ENCODE measurements at regions of chr13 and their contacts with region 1.

Region 1: DNA sequence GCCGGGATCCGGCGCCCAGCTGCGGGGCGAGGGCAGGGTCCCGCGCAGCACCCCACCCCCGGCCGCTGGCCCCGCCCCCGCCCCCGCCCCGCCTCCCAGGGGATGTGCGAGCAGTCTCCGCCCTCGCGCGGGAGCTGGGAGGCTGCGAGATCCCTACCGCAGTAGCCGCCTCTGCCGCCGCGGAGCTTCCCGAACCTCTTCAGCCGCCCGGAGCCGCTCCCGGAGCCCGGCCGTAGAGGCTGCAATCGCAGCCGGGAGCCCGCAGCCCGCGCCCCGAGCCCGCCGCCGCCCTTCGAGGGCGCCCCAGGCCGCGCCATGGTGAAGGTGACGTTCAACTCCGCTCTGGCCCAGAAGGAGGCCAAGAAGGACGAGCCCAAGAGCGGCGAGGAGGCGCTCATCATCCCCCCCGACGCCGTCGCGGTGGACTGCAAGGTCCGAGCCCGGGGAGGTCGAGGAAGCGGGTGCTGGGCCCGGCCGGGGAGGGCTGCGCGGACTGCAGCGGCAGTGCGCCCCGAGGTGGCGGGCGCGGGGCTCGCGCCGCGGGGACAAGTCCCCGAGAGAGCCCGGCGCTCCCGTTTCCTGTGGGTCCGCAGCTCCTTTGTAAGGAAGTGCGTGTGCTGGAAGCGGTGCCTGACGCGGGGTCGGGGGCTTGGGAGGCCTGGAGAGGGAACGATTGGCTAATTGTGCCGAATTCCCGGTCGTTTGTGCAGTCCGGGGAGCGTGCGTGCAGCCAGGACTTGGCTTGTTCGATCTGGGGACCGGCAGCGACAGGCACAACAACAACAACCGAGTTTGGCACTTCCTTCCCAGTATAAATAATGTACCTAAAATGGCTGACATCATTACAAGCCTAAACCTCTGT is at the start of gene ITM2B:
- DNase-seq: peak; percentile 58 to 64
- ATAC-seq: peak; percentile 71
- H3K4me3 ChIP-seq: peak within 1 kb of the TSS; percentile 76 to 99 (median 88)
- H3K27ac ChIP-seq: peak within 1 kb of the TSS; percentile 91 to 99 (median 97)
- H3K4me1 ChIP-seq: peaks cover 33 to 42% of the 10 kb centered on the region in 2 donors
- H3K27me3 ChIP-seq: no peaks in the 10 kb centered on the region
- CTCF ChIP-seq: peak in 3 of 5 experiments; percentile 27 to 59 (median 45)
- POLR2A ChIP-seq: peak; percentile 84 to 89
- total RNA-seq, gene ITM2B: 107 to 209 (median 168) TPM

Region 2: DNA sequence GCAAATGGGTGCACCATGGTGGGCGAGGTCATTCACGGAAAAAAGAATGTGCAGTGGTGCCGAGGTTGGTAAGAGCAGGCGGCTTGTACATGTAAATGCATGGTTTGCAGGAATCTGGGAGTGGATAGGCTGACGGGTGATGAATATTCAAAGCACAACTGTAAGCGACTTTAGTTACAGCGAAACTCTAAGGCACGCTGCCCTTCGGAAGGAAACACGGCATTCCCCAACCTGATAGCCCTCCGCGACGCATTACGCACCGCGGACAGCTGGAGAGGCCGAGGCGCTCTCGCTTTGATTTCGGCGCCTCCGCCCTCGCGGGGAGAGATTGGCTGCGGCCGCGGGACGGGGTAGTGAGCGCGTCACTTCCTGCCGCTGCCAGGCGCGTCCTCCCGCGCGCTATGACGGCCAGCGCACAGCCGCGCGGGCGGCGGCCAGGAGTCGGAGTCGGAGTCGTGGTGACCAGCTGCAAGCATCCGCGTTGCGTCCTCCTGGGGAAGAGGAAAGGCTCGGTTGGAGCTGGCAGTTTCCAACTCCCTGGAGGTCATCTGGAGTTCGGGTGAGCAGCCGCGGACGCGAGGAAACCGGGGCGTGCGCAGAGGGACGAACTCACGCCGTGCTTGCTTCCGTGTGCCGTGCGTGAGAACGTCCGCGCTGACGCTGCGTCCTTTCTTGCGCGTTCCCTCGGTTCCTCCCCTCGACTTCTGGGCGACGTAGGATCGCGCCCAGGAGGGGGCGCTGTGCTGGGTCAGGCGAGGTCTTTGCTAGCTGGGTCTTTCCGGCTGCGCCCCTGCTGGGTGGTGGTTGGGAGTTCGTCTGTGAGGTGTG is 195.7 kb before region 1 on chr13 and contains the start of gene NUDT15:
- in situ Hi-C with region 1: no loop called
- intact Hi-C with region 1: loop called (anchors 5 kb)
- DNase-seq: peak; percentile 85 to 90
- ATAC-seq: peak; percentile 99
- H3K4me3 ChIP-seq: peak within 1 kb of the TSS; percentile 73 to 92 (median 86)
- H3K27ac ChIP-seq: peak within 1 kb of the TSS; percentile 93 to 99 (median 97)
- H3K4me1 ChIP-seq: peaks cover 6 to 16% of the 10 kb centered on the region in 2 donors
- H3K27me3 ChIP-seq: no peaks in the 10 kb centered on the region
- CTCF ChIP-seq: peak; percentile 96 to 98 (median 97)
- POLR2A ChIP-seq: peak; percentile 76 to 82
- total RNA-seq, gene NUDT15: 7.1 to 13.9 (median 10.7) TPM

Region 3: GRCh38 chr13:48094781-48095502 is 138.3 kb before region 1 on chr13 and contains the start of gene MED4:
- in situ Hi-C with region 1: no loop called
- intact Hi-C with region 1: loop called (anchors 2 kb)
- DNase-seq: peak; percentile 85 to 92
- ATAC-seq: peak; percentile 97 to 98
- H3K4me3 ChIP-seq: peak within 1 kb of the TSS; percentile 85 to 99 (median 93)
- H3K27ac ChIP-seq: peak within 1 kb of the TSS; percentile 84 to 94 (median 91)
- H3K4me1 ChIP-seq: peaks cover 37 to 44% of the 10 kb centered on the region in 2 donors
- H3K27me3 ChIP-seq: no peaks in the 10 kb centered on the region
- CTCF ChIP-seq: peak; percentile 96 to 99 (median 98)
- POLR2A ChIP-seq: peak; percentile 85 to 86
- total RNA-seq, gene MED4: 30.7 to 37.5 (median 31.9) TPM

Region 4: GRCh38 chr13:48126944-48127830 is 106.1 kb before region 1 on chr13:
- in situ Hi-C with region 1: loop called in 2 of 4 experiments (anchors 10 kb)
- intact Hi-C with region 1: loop called (anchors 2 kb)
- DNase-seq: peak; percentile 43 to 72
- ATAC-seq: peak; percentile 73 to 79
- H3K4me3 ChIP-seq: no peak overlapping the region
- H3K27ac ChIP-seq: peak overlapping the region; percentile 27 to 80 (median 73)
- H3K4me1 ChIP-seq: peaks cover 12 to 33% of the 10 kb centered on the region in 2 donors
- H3K27me3 ChIP-seq: no peaks in the 10 kb centered on the region
- CTCF ChIP-seq: peak; percentile 53 to 74 (median 72)
- POLR2A ChIP-seq: no peak

Region 5: GRCh38 chr13:48303359-48304142 is 70.3 kb after region 1 on chr13 and contains the start of gene RB1:
- in situ Hi-C with region 1: loop called in 2 of 4 experiments (anchors 5 to 10 kb)
- intact Hi-C with region 1: loop called (anchors 1 kb)
- DNase-seq: peak; percentile 81 to 88
- ATAC-seq: peak; percentile 93 to 94
- H3K4me3 ChIP-seq: peak within 1 kb of the TSS; percentile 82 to 98 (median 92)
- H3K27ac ChIP-seq: peak within 1 kb of the TSS; percentile 94 to 99 (median 99)
- H3K4me1 ChIP-seq: peaks cover 13 to 23% of the 10 kb centered on the region in 2 donors
- H3K27me3 ChIP-seq: no peaks in the 10 kb centered on the region
- CTCF ChIP-seq: peak in 1 of 5 experiments; percentile 8
- POLR2A ChIP-seq: peak; percentile 97
- total RNA-seq, gene RB1: 29.3 to 45.6 (median 33.2) TPM

Region 6: GRCh38 chr13:48571126-48571913 is 338.0 kb after region 1 on chr13:
- in situ Hi-C with region 1: no loop called
- intact Hi-C with region 1: loop called (anchors 5 kb)
- DNase-seq: peak; percentile 49 to 54
- ATAC-seq: peak; percentile 81 to 88
- H3K4me3 ChIP-seq: peak overlapping the region; percentile 28 to 46 (median 38)
- H3K27ac ChIP-seq: peak overlapping the region; percentile 82 to 86 (median 86)
- H3K4me1 ChIP-seq: peaks cover 41 to 55% of the 10 kb centered on the region in 2 donors
- H3K27me3 ChIP-seq: no peaks in the 10 kb centered on the region
- CTCF ChIP-seq: no peak
- POLR2A ChIP-seq: no peak